Activated B cell treated with CpG ODN at 0.5 μM for 24 hours (primary cell): ENCODE measurements at regions of chr5 and their contacts with region 1.

Region 1: DNA sequence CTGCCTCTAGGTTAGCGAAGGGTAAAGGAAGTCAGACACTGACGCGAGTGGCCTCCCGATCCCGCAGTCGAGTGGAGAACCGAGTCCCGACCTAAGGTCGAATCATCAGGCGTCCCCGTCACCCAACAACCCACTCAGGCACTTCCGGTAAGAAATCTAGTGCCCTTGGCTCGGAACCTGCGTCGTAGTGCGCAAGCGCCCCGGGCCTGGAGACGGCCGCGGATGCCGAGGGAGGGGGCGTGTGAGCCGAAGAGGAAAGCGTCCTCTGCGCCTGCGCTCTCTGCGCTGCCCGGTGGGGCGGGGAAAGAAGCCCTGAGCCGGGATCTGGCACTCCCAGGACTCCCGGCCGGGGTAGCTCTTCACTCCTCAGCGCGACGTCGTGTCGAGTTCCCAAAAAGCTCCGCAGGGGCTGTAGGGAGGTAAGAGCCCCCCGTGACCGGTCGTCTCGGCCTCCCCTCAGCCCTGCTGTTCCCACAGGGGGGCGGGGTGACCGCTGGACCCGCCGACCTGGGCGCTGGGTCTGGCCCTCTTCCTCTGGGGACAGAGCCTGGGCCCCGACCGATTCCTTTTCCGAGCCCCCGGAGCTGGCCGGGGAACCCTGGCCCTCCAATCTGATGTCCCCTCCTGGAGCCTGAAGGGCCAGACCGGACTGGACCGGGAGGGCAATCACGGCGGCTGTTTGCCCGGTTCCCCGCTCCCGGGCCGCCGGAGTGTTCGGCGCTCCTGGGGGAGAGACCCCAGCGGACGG is at the start of gene ZFYVE16:
- DNase-seq: peak; percentile 95
- ATAC-seq: peak; percentile 84
- H3K4me3 Mint-ChIP-seq: peak within 1 kb of the TSS; percentile 91
- H3K27ac Mint-ChIP-seq: peak within 1 kb of the TSS; percentile 95
- H3K4me1 Mint-ChIP-seq: peaks cover 17% of the 10 kb centered on the region
- H3K27me3 Mint-ChIP-seq: no peaks in the 10 kb centered on the region
- CTCF ChIP-seq: no peak
- total RNA-seq, gene ZFYVE16: 19.8 and 21.1 TPM in 2 replicates

Region 2: DNA sequence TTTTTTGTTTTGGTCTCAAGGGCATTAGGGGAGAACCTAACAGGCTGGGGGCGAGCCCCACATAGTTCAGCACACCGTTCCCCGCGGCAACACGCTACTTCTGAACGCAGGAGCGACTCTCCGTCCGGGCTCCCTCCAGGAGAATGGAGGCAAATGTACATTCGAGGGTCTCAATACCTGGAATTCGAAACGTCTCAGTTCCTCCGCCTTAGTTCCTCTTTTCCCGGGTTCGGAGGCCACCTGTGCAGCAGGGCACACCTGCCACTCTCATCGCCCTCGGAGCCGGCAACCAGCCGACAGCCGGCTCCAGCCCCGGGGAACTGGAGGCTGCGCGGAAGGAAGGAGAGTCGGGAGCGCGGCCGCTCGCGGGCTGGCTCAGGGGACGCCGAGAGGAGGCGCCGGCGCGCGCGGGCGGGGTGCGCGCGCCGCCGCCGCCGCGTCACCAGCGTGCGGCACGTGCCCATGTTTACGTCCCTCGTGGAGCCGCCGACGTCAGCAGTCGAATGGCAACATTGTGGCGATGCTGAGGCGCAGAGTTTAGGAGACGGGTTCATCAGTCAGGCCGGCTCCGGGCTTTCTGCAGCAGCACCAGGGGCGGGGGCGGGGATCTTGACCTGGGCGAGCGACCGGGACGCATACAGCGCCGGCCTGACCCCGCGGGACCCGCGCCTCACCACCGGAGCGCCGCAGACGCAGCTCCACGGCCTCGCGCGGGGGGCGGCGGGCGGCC is 1172.1 kb before region 1 on chr5 and contains the start of gene JMY:
- CTCF ChIA-PET with region 1: no interaction called
- POLR2A ChIA-PET with region 1: no interaction called
- intact Hi-C with region 1: loop called (anchors 5 kb)
- DNase-seq: peak; percentile 68
- ATAC-seq: peak; percentile 79
- H3K4me3 Mint-ChIP-seq: peak within 1 kb of the TSS; percentile 91
- H3K27ac Mint-ChIP-seq: peak within 1 kb of the TSS; percentile 94
- H3K4me1 Mint-ChIP-seq: peaks cover 34% of the 10 kb centered on the region
- H3K27me3 Mint-ChIP-seq: no peaks in the 10 kb centered on the region
- CTCF ChIP-seq: no peak
- total RNA-seq, gene JMY: 6.4 and 6.9 TPM in 2 replicates

Region 3: DNA sequence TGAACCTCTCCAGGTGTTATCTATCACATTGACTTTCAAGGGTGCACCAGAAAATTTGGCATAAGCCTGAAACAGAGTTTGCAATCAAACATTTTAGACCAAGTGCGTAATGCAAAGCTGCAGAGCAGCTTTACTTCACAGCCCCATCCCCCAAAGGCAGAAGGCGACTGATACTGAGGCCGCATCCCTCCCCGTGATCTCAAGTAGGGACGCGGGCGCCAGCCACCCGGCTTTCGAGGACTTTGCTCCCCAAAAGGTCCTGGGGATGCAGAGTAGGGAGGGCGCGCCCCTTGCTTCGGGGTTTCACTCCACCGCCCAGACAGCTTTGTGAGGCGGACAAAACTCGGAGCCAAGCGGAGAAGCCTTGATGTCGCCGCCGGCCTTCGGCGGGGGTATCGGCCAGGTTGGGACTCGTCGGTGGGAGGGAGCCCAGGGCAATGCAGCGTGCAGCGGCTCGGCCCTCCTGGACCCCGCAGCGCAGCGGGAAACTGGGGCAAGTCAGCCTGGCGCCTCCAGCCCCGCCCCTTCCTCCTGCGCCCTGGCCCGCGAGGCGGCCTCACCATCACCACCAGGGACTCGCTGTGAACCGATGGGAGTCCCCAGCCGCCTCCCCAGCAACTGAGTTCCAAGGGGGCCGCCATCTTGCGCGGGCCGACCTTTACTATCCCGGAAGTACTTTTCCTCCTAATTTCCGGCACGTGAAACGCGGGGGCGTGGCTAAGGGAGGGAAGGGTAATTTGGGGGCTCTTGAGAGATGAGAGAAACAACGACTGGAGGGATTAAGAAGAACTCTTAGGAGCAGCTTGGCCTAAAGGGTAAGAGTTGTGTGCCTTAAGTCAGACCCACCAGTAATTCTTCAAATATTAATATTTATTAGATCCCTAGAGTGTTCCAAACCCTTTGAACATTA is 417.1 kb before region 1 on chr5 and contains the start of gene MTX3:
- CTCF ChIA-PET with region 1: no interaction called
- POLR2A ChIA-PET with region 1: interaction called, 10 read pairs
- intact Hi-C with region 1: loop called (anchors 5 kb)
- DNase-seq: peak; percentile 74
- ATAC-seq: peak; percentile 95
- H3K4me3 Mint-ChIP-seq: peak within 1 kb of the TSS; percentile 88
- H3K27ac Mint-ChIP-seq: peak within 1 kb of the TSS; percentile 84
- H3K4me1 Mint-ChIP-seq: peaks cover 23% of the 10 kb centered on the region
- H3K27me3 Mint-ChIP-seq: peaks cover 2% of the 10 kb centered on the region
- CTCF ChIP-seq: no peak
- total RNA-seq, gene MTX3: 20.0 and 21.4 TPM in 2 replicates

Region 4: GRCh38 chr5:80487829-80488721 is 80.2 kb after region 1 on chr5 and contains the start of gene FAM151B:
- CTCF ChIA-PET with region 1: no interaction called
- POLR2A ChIA-PET with region 1: no interaction called
- intact Hi-C with region 1: loop called (anchors 5 kb)
- DNase-seq: peak; percentile 60
- ATAC-seq: peak; percentile 87
- H3K4me3 Mint-ChIP-seq: peak within 1 kb of the TSS; percentile 78
- H3K27ac Mint-ChIP-seq: no peak within 1 kb of the TSS
- H3K4me1 Mint-ChIP-seq: peaks cover 19% of the 10 kb centered on the region
- H3K27me3 Mint-ChIP-seq: peaks cover 37% of the 10 kb centered on the region
- CTCF ChIP-seq: no peak
- total RNA-seq, gene FAM151B: 0.47 TPM in 1 of 2 replicates, not detected in the other

Region 5: DNA sequence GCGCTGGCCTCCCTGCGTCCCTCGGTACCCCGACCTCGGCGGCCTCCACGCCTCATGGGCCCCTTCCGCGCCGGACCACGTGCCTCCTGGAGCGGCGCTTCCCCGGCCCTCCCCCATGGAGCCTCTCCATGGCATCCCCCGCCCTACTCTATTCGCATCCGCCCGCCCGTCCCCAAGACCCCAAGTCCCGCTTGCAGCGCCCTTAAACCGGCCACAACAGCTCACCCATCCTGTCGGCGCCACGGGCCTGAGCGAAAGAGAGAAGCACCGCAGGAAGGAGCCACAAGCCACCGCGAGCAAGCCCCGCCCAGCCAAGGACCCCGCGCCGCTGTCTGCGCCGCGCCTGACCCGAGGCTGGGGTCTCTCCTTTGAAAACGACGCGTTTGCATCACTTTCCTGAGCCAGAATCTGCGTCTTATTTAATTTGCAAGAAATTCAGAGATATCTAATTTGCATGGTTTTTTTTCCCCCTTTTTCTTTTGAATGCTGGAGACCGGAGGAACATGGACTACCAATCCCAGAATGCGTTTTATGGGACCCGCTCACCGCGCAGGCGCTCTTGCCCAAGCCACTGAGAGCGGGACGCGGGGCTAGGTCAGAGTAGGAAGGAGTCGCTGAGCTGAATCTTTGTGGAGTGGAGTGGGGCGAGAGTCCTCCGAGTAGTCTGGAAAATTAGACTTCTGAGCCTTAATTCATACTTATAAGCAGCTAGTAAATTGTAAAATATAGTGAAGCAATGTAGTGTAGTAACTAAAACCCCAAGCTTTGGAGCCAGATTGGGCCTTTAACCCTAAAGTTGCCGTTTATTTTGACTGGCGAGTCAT is 1870.4 kb after region 1 on chr5 and contains the start of gene RPS23:
- CTCF ChIA-PET with region 1: no interaction called
- POLR2A ChIA-PET with region 1: no interaction called
- intact Hi-C with region 1: loop called (anchors 1 kb)
- DNase-seq: peak; percentile 79
- ATAC-seq: peak; percentile 92
- H3K4me3 Mint-ChIP-seq: peak within 1 kb of the TSS; percentile 96
- H3K27ac Mint-ChIP-seq: peak within 1 kb of the TSS; percentile 99
- H3K4me1 Mint-ChIP-seq: peaks cover 44% of the 10 kb centered on the region
- H3K27me3 Mint-ChIP-seq: no peaks in the 10 kb centered on the region
- CTCF ChIP-seq: no peak
- total RNA-seq, gene RPS23: 4,125 and 4,753 TPM in 2 replicates